ENCODE measurements at regions of chr5 and their contacts with region 1.

Region 1: GRCh38 chr5:124524552-124525232 is 221.7 kb downstream of the ZNF608 start:
- DNase-seq: no peak
- ATAC-seq: no peak
- H3K4me3 Mint-ChIP-seq: no peak overlapping the region
- H3K27ac Mint-ChIP-seq: no peak overlapping the region
- H3K4me1 Mint-ChIP-seq: peaks cover 12% of the 10 kb centered on the region
- H3K27me3 Mint-ChIP-seq: peaks cover 9% of the 10 kb centered on the region

Region 2: GRCh38 chr5:124583469-124584350 is 59.0 kb after region 1 on chr5:
- CTCF ChIA-PET with region 1: no interaction called
- POLR2A ChIA-PET with region 1: no interaction called
- intact Hi-C with region 1: loop called (anchors 1 to 2 kb)
- DNase-seq: peak; percentile 47
- ATAC-seq: peak; percentile 95
- H3K4me3 Mint-ChIP-seq: no peak overlapping the region
- H3K27ac Mint-ChIP-seq: no peak overlapping the region
- H3K4me1 Mint-ChIP-seq: peaks cover 23% of the 10 kb centered on the region
- H3K27me3 Mint-ChIP-seq: peaks cover 5% of the 10 kb centered on the region

Region 3: DNA sequence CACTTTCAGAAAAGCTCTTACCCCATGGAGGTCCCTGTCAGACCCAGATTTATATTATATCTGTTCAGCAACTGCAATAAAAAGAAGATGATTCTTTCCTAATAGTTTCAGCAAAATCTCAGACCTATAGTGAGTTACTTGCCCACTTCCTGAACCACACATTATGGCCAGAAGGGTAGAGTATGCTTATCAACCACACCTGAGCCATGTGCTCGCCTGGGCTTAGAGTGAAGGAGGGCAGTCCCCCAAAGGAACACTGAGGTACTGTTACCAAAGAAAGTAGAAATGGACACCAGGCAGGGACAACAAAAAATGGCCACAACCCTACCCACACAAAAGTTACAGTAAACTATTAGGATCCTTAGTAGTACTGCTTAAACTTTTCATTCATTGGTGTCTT is 93.1 kb after region 1 on chr5:
- CTCF ChIA-PET with region 1: no interaction called
- POLR2A ChIA-PET with region 1: no interaction called
- intact Hi-C with region 1: no loop called
- DNase-seq: no peak
- ATAC-seq: no peak
- H3K4me3 Mint-ChIP-seq: no peak overlapping the region
- H3K27ac Mint-ChIP-seq: no peak overlapping the region
- H3K4me1 Mint-ChIP-seq: no peaks in the 10 kb centered on the region
- H3K27me3 Mint-ChIP-seq: peaks cover 6% of the 10 kb centered on the region

Region 4: GRCh38 chr5:124649491-124650146 is 124.9 kb after region 1 on chr5:
- CTCF ChIA-PET with region 1: no interaction called
- POLR2A ChIA-PET with region 1: no interaction called
- intact Hi-C with region 1: loop called in 1 of 2 experiments (anchors 5 kb)
- DNase-seq: peak; percentile 78
- ATAC-seq: peak; percentile 85
- H3K4me3 Mint-ChIP-seq: peak overlapping the region; percentile 37
- H3K27ac Mint-ChIP-seq: no peak overlapping the region
- H3K4me1 Mint-ChIP-seq: peaks cover 26% of the 10 kb centered on the region
- H3K27me3 Mint-ChIP-seq: peaks cover 37% of the 10 kb centered on the region

Region 5: GRCh38 chr5:125408582-125409505 is 884.2 kb after region 1 on chr5:
- CTCF ChIA-PET with region 1: no interaction called
- POLR2A ChIA-PET with region 1: interaction called, 17 read pairs
- intact Hi-C with region 1: no loop called
- DNase-seq: peak; percentile 33
- ATAC-seq: peak; percentile 91
- H3K4me3 Mint-ChIP-seq: no peak overlapping the region
- H3K27ac Mint-ChIP-seq: no peak overlapping the region
- H3K4me1 Mint-ChIP-seq: peaks cover 23% of the 10 kb centered on the region
- H3K27me3 Mint-ChIP-seq: peaks cover 2% of the 10 kb centered on the region

Region 6: GRCh38 chr5:126438267-126438666 is 1913.6 kb after region 1 on chr5:
- CTCF ChIA-PET with region 1: no interaction called
- POLR2A ChIA-PET with region 1: no interaction called
- intact Hi-C with region 1: loop called in 1 of 2 experiments (anchors 5 kb)
- DNase-seq: peak; percentile 41
- ATAC-seq: peak; percentile 99
- H3K4me3 Mint-ChIP-seq: peak overlapping the region; percentile 9
- H3K27ac Mint-ChIP-seq: peak overlapping the region; percentile 89
- H3K4me1 Mint-ChIP-seq: peaks cover 34% of the 10 kb centered on the region
- H3K27me3 Mint-ChIP-seq: no peaks in the 10 kb centered on the region